ENCODE measurements at regions of chr1 and their contacts with region 1.

Region 1: GRCh38 chr1:155084722-155085503 is 6.3 kb downstream of the EFNA3 start:
- DNase-seq: peak; percentile 98
- H3K4me3 Mint-ChIP-seq: peak overlapping the region; percentile 92
- H3K27ac Mint-ChIP-seq: peak overlapping the region; percentile 93
- H3K4me1 Mint-ChIP-seq: peaks cover 36% of the 10 kb centered on the region
- H3K27me3 Mint-ChIP-seq: peaks cover 28% of the 10 kb centered on the region

Region 2: DNA sequence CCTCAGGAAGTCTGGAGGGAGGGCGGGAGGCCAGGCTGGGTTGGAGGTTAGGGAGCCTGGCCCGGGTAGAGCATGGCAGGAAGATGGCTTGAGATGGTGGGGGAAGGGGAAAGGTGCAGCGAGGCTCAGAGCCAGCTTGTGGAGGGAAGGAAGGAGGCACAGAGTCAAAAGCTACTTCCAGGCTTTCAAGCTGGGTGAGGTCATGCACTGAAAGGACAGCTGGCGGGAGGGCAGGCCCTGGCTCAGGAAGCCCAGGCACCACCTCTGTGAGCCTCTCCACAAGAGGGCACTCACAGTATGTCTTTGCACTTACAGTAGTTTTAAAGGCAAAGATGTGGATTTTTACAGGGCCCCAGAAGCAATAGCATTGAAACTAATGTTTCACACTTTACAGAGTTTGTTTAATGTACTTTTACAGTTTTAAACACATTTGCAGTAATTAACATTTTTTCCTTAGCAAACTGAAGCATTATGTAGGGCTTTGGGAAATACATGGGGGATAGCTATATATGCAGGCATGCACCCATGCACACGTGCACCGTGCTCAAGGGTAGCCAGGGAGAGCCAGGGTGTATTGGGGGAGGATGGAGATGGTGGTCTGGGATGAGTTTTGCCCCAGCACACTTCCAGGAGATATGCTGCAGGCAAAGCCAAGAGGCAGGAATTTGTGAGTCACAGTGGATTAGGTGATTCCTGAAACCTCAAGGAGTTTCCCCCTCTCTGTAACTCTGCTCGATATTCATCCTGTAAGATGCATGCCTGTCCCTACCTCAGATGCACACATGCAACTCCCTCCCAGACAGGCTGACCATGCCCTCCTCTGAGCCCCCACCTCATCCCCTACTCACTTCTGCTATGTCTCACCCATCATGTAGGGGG is 39.9 kb before region 1 on chr1:
- intact Hi-C with region 1: loop called (anchors 1 kb)
- DNase-seq: peak; percentile 90
- H3K4me3 Mint-ChIP-seq: no peak overlapping the region
- H3K27ac Mint-ChIP-seq: no peak overlapping the region
- H3K4me1 Mint-ChIP-seq: peaks cover 22% of the 10 kb centered on the region
- H3K27me3 Mint-ChIP-seq: peaks cover 6% of the 10 kb centered on the region

Region 3: GRCh38 chr1:155063550-155064110 is 21.3 kb before region 1 on chr1 and contains the start of gene EFNA4:
- intact Hi-C with region 1: loop called (anchors 1 kb)
- DNase-seq: peak; percentile 96
- H3K4me3 Mint-ChIP-seq: peak within 1 kb of the TSS; percentile 80
- H3K27ac Mint-ChIP-seq: peak within 1 kb of the TSS; percentile 54
- H3K4me1 Mint-ChIP-seq: peaks cover 23% of the 10 kb centered on the region
- H3K27me3 Mint-ChIP-seq: no peaks in the 10 kb centered on the region
- total RNA-seq, gene EFNA4: 5.8 and 6.2 TPM in 2 replicates

Region 4: GRCh38 chr1:155135415-155136028 is 50.6 kb after region 1 on chr1 and contains the start of gene SLC50A1:
- intact Hi-C with region 1: loop called (anchors 2 kb)
- DNase-seq: peak; percentile 98
- H3K4me3 Mint-ChIP-seq: peak within 1 kb of the TSS; percentile 98
- H3K27ac Mint-ChIP-seq: peak within 1 kb of the TSS; percentile 98
- H3K4me1 Mint-ChIP-seq: peaks cover 44% of the 10 kb centered on the region
- H3K27me3 Mint-ChIP-seq: peaks cover 7% of the 10 kb centered on the region
- total RNA-seq, gene SLC50A1: 46.2 and 46.3 TPM in 2 replicates